CD8-positive, alpha-beta memory T cell (primary cell): ENCODE measurements at regions of chr15 and their contacts with region 1.

Region 1: DNA sequence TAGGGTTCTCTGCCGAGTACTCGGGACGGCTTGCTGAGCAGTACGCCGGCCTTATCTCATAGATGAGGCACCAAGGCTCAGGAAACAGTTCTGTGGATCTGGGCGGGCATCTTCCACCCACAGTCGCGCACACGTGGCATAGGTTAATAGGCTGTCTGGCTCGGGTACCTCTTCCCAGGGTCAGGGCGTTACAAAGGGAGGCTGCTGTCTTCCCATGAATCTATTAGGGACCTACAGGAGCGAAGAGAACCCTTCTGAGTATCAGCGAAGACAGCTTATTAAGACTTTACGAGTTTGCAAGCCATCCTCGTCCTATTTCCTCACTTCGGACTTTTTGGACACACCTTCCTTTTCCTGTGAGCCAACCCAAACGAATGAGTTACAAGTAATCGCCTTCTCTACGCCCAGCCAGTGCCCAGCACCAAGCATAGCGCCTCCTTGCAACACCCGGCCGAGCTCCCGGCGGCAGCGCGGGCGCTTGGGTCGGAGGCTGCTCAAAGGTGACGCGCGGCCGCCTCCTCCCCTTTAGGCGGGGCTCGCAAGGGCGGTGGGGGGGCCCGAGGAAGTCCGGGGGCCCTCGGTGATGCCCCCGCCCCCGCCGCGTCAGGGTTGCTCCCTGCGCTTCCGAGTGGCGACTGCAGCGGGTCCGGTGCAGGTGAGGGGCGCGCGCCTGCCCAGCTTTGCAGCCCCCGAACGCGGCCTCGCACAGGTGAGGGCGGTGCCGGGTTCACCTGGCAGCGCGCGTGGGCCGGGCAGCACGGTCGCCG is at the start of gene MCTP2:
- DNase-seq: peak; percentile 78 to 91 (median 84)
- H3K4me3 ChIP-seq: peak within 1 kb of the TSS; percentile 94
- H3K4me3 Mint-ChIP-seq: peak within 1 kb of the TSS; percentile 92 to 99 (median 96)
- H3K27ac ChIP-seq: peak within 1 kb of the TSS; percentile 85
- H3K27ac Mint-ChIP-seq: peak within 1 kb of the TSS; percentile 85 to 99 (median 98)
- H3K4me1 ChIP-seq: peaks cover 32% of the 10 kb centered on the region
- H3K4me1 Mint-ChIP-seq: peaks cover 60 to 75% (median 71%) of the 10 kb centered on the region in 3 donors
- H3K27me3 ChIP-seq: no peaks in the 10 kb centered on the region
- H3K27me3 Mint-ChIP-seq: no peaks in the 10 kb centered on the region
- total RNA-seq, gene MCTP2: 16.5 to 17.0 TPM

Region 2: DNA sequence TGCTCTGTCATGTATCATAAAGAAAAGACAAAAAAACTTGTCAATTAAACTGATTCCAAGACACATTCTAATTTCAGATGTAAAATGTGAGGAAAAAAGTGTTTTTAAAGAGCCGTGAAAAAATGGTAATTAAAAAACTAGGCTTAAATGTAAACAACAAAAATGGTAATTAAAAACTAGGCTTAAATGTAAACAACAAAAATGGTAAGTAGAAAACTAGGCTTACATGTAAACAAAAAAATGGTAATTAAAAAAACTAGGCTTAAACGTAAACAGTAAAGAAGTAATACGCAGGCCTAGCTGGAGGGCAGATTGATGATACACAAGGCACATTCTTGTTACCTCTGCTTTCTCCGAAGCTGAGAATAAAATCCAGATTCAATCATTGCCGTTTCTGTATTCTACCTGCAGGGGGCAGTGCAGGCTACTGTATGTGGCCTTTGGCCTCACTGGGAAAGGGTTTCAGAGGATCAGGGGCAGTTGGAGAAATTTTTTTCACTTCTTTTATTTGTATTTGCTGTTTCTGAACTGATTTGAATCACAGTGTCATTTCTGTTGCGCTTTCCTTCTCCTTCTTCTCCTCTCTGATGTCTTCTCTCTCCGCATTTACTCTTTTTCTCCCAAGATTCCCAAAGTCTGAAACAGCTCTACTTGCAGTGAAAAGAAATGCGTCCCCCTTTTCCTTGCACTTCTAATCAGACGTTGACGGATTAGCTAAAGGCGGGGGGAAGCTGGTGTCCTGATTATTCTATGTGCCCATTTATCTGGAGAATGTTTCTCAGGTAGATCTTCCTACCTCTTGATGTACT is 66.9 kb before region 1 on chr15:
- CTCF ChIA-PET with region 1: interaction called, 10 read pairs
- POLR2A ChIA-PET with region 1: no interaction called
- DNase-seq: peak; percentile 27 to 62 (median 34)
- H3K4me3 ChIP-seq: no peak overlapping the region
- H3K4me3 Mint-ChIP-seq: no peak overlapping the region
- H3K27ac ChIP-seq: no peak overlapping the region
- H3K27ac Mint-ChIP-seq: peak overlapping the region in 2 of 8 donors; percentile 1 to 59
- H3K4me1 ChIP-seq: no peaks in the 10 kb centered on the region
- H3K4me1 Mint-ChIP-seq: no peaks in the 10 kb centered on the region
- H3K27me3 ChIP-seq: no peaks in the 10 kb centered on the region
- H3K27me3 Mint-ChIP-seq: peaks cover 0 to 15% of the 10 kb centered on the region in 2 donors

Region 3: DNA sequence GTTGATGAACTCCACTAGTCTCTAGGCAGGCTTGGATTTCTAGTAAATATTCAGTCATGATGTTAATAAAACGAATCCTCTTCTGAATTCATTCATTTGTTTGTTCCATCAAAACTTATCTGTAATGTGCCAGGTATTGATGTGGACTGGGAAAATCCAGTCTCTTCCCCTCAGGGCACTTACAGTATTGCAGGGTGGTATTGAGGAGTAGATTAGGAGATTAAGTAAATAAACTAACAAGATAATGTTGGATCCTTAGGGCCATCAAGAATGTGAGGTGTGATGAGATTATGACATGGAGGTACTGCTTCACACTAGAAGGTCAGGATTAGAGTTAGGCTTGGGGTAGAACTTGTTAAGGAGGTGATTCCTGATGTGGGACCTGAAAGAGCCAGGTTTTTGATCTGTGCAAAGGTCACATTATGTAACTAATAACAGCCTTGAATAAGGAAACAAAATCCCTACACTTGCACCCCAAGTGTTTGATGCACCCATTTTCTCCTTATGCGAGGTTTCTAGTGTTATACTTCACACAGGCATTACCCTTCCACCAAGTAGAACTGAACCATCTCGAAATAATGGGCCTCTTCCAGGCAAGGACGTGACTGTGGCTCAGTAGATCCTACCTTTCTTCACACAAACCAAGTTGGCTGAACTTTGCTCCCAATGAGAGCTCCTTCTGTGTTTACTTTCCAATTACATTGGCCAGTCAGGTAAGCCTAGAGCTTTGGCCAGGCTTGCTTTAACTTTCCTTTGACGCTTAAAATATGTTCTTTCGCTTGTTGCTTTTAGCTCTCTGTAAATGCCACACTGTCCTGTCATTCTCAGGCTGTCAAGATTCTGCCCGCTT is 16.9 kb after region 1 on chr15:
- CTCF ChIA-PET with region 1: interaction called, 10 read pairs
- POLR2A ChIA-PET with region 1: no interaction called
- DNase-seq: no peak
- H3K4me3 ChIP-seq: no peak overlapping the region
- H3K4me3 Mint-ChIP-seq: no peak overlapping the region
- H3K27ac ChIP-seq: no peak overlapping the region
- H3K27ac Mint-ChIP-seq: peak overlapping the region in 2 of 8 donors; percentile 4 to 7
- H3K4me1 ChIP-seq: peaks cover 2% of the 10 kb centered on the region
- H3K4me1 Mint-ChIP-seq: peaks cover 37 to 57% (median 41%) of the 10 kb centered on the region in 3 donors
- H3K27me3 ChIP-seq: no peaks in the 10 kb centered on the region
- H3K27me3 Mint-ChIP-seq: no peaks in the 10 kb centered on the region

Region 4: GRCh38 chr15:94272251-94272898 is 41.2 kb after region 1 on chr15:
- CTCF ChIA-PET with region 1: no interaction called
- POLR2A ChIA-PET with region 1: no interaction called
- DNase-seq: peak in 2 of 5 donors; percentile 1 to 70
- H3K4me3 ChIP-seq: no peak overlapping the region
- H3K4me3 Mint-ChIP-seq: no peak overlapping the region
- H3K27ac ChIP-seq: peak overlapping the region; percentile 15
- H3K27ac Mint-ChIP-seq: no peak overlapping the region
- H3K4me1 ChIP-seq: peaks cover 29% of the 10 kb centered on the region
- H3K4me1 Mint-ChIP-seq: peaks cover 9 to 23% (median 22%) of the 10 kb centered on the region in 3 donors
- H3K27me3 ChIP-seq: no peaks in the 10 kb centered on the region
- H3K27me3 Mint-ChIP-seq: no peaks in the 10 kb centered on the region

Region 5: DNA sequence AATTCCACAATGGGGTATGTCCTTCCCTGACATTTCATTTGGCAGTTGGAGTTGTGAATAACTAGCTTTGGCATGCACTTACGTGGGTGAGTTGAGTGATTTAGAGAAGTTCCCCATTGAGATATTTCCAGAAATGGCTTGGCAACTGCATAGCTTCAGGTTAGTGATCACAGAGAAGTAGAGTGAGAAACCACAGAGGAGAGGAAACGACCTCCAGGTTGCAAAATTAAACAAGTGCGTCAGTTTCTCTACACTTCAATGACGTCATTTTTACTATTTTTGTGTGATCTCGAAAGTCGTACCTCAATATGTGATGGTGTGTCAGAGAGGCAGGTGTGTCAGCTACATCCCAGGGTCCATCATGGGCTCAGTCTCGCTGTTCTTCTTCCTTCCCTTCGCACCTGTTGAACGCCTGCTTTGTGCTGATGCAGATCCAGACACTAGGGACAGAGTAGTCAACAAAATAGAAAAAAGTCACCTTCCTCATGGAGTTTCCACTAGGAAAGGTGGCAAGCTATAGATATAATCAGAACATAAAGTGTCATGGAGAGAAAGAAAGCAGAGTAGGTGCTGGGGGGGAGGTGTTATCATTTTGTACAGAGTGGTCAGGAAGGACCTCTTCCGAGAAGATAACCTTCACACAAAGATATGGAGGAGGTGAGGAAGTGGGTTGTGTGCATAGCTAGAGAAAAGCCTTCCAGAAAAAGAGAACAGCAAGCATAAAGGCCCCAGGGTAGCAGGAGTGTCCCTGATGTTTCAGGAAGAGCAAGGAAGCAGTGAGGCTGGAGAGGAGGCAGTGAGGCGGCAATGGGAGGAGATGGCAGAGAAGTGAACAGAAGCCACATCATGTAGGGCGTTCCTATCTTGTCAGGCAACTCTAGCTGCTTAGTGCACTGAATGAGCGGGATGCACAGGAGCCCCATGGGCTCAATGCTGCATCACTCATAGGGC is 75.8 kb after region 1 on chr15:
- CTCF ChIA-PET with region 1: interaction called, 3 read pairs
- POLR2A ChIA-PET with region 1: interaction called, 10 read pairs
- DNase-seq: peak in 3 of 5 donors; percentile 7 to 73 (median 53)
- H3K4me3 ChIP-seq: no peak overlapping the region
- H3K4me3 Mint-ChIP-seq: peak overlapping the region; percentile 22 to 82 (median 56)
- H3K27ac ChIP-seq: no peak overlapping the region
- H3K27ac Mint-ChIP-seq: peak overlapping the region; percentile 49 to 95 (median 89)
- H3K4me1 ChIP-seq: peaks cover 34% of the 10 kb centered on the region
- H3K4me1 Mint-ChIP-seq: peaks cover 39 to 56% (median 49%) of the 10 kb centered on the region in 3 donors
- H3K27me3 ChIP-seq: no peaks in the 10 kb centered on the region
- H3K27me3 Mint-ChIP-seq: no peaks in the 10 kb centered on the region